K562 (cell line): ENCODE measurements at regions of chr5 and their contacts with region 1.

Region 1: DNA sequence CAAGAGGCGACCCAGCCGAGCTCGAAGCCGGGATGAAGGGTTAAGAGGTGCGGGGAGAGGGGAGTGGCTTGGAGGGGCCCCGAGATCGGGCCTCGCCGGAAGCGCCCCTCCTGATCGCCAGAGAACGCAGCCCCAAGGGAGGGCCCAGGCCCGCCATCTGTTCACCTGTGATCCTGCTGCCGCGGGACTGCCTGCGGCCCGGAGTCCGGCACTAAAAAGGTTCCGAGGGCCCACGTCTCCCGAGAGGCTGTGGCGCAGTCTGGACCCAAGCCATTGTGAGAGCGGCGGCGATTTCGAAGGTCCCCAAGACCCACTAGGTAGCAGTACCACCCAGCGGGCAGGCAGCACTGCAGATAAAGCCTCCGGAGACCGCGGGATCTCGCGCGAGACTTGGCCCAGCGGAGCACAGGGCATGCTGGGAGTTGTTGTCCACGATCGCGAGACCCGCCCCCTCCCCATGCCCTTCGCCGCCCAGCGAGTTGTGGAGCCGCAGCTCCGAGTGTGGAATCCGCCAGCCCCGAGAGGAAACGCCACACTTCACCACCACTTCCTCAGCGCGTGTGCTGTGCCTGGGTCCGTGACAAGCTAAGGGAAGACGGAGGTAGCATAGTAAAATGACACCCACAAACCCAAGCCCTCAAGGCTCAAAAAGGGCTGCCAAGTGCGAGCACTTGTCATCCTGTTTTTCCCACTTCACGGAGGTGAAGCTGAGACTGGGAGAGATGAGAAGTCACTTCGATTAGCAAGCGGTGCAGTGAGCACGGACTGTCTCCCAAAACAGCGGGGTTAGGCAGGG is at the start of gene KIAA1191:
- DNase-seq: peak; percentile 91 to 96 (median 93)
- ATAC-seq: peak; percentile 99
- H3K4me3 ChIP-seq: peak within 1 kb of the TSS; percentile 96
- H3K27ac ChIP-seq: peak within 1 kb of the TSS; percentile 75
- H3K4me1 ChIP-seq: peaks cover 9 to 18% of the 10 kb centered on the region in 2 experiments; a peak in 4 of 5 replicates
- H3K27me3 ChIP-seq: no peaks in the 10 kb centered on the region
- CTCF ChIP-seq: peak in 2 of 3 experiments; percentile 54 to 63; a peak in 4 of 6 replicates
- EP300 ChIP-seq: no peak
- POLR2A ChIP-seq: peak; percentile 95
- RAD21 ChIP-seq: peak; percentile 56 to 59
- polyA plus RNA-seq, gene KIAA1191: 31.0 to 56.5 TPM

Region 2: DNA sequence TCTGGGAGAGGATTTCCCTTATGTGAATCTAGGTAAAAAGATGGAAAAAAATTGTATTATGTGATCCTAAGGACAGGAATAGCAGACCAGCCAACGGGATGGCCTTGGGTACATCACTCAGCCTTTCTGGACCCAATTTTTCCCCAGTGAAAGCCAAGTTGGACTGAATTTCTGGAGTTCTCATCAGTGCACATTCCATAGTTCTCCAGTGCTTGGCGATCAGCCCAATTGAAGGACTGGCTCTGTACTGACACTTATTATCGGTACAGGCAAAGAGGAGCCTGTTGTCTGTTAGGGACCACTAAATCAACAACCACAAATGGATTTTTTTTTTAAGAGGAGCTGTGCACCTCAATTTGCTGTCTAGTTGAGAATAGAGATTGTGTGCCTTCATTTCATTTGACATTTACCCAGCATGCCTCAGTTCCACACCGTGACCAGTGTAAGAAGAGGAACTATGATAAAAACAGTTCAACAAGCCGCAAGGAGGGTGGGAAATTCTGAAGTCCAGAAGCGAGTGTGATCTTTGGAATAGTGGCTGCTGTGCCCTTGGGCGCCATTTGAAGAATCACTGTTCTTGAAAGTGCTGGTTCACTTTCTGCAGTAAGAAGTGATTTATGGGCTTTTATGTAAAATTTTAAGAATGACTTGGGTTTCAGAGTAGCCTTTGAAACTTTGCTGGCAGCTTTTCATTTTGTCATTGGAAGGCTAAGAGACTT is 11.6 kb after region 1 on chr5:
- CTCF ChIA-PET with region 1: no interaction called
- POLR2A ChIA-PET with region 1: interaction called, 11 read pairs
- in situ Hi-C with region 1: no loop called
- intact Hi-C with region 1: no loop called
- DNase-seq: peak in 2 of 4 experiments; percentile 43 to 49
- ATAC-seq: peak; percentile 79
- H3K4me3 ChIP-seq: no peak overlapping the region
- H3K27ac ChIP-seq: no peak overlapping the region
- H3K4me1 ChIP-seq: peaks cover 7 to 19% of the 10 kb centered on the region in 2 experiments
- H3K27me3 ChIP-seq: no peaks in the 10 kb centered on the region
- CTCF ChIP-seq: no peak
- EP300 ChIP-seq: no peak
- POLR2A ChIP-seq: no peak
- RAD21 ChIP-seq: no peak